PC-9 (cell line): ENCODE measurements at regions of chr11 and their contacts with region 1.

Region 1: GRCh38 chr11:123054301-123055065 is 7.5 kb downstream of the HSPA8 start:
- DNase-seq: peak in 1 of 2 experiments; percentile 74
- H3K4me3 ChIP-seq: no peak overlapping the region
- H3K27ac ChIP-seq: peak overlapping the region; percentile 36
- H3K4me1 ChIP-seq: peaks cover 21% of the 10 kb centered on the region
- H3K27me3 ChIP-seq: no peaks in the 10 kb centered on the region
- CTCF ChIP-seq: peak; percentile 87

Region 2: GRCh38 chr11:122578168-122578825 is 476.2 kb before region 1 on chr11:
- CTCF ChIA-PET with region 1: no interaction called
- POLR2A ChIA-PET with region 1: interaction called, 11 read pairs
- intact Hi-C with region 1: no loop called
- DNase-seq: no peak
- H3K4me3 ChIP-seq: no peak overlapping the region
- H3K27ac ChIP-seq: no peak overlapping the region
- H3K4me1 ChIP-seq: peaks cover 11% of the 10 kb centered on the region
- H3K27me3 ChIP-seq: no peaks in the 10 kb centered on the region
- CTCF ChIP-seq: no peak

Region 3: GRCh38 chr11:122721964-122722266 is 332.6 kb before region 1 on chr11:
- CTCF ChIA-PET with region 1: no interaction called
- POLR2A ChIA-PET with region 1: interaction called, 12 read pairs
- intact Hi-C with region 1: no loop called
- DNase-seq: peak; percentile 52 to 82
- H3K4me3 ChIP-seq: no peak overlapping the region
- H3K27ac ChIP-seq: peak overlapping the region; percentile 41; the same call in 1 of the 2 replicates
- H3K4me1 ChIP-seq: peaks cover 49% of the 10 kb centered on the region
- H3K27me3 ChIP-seq: no peaks in the 10 kb centered on the region
- CTCF ChIP-seq: no peak

Region 4: GRCh38 chr11:122863704-122864326 is 190.7 kb before region 1 on chr11:
- CTCF ChIA-PET with region 1: no interaction called
- POLR2A ChIA-PET with region 1: interaction called, 4 read pairs
- intact Hi-C with region 1: loop called (anchors 1 kb)
- DNase-seq: peak in 1 of 2 experiments; percentile 37
- H3K4me3 ChIP-seq: no peak overlapping the region
- H3K27ac ChIP-seq: 0 out of 2 replicates have a peak overlapping the region, but pooled peaks have one; percentile 5
- H3K4me1 ChIP-seq: peaks cover 35% of the 10 kb centered on the region
- H3K27me3 ChIP-seq: no peaks in the 10 kb centered on the region
- CTCF ChIP-seq: peak; percentile 93

Region 5: GRCh38 chr11:123174196-123175183 is 120.0 kb after region 1 on chr11:
- CTCF ChIA-PET with region 1: interaction called, 14 read pairs
- POLR2A ChIA-PET with region 1: no interaction called
- intact Hi-C with region 1: no loop called
- DNase-seq: peak in 1 of 2 experiments; percentile 84
- H3K4me3 ChIP-seq: no peak overlapping the region
- H3K27ac ChIP-seq: peak overlapping the region; percentile 75
- H3K4me1 ChIP-seq: peaks cover 41% of the 10 kb centered on the region
- H3K27me3 ChIP-seq: no peaks in the 10 kb centered on the region
- CTCF ChIP-seq: no peak

Region 6: DNA sequence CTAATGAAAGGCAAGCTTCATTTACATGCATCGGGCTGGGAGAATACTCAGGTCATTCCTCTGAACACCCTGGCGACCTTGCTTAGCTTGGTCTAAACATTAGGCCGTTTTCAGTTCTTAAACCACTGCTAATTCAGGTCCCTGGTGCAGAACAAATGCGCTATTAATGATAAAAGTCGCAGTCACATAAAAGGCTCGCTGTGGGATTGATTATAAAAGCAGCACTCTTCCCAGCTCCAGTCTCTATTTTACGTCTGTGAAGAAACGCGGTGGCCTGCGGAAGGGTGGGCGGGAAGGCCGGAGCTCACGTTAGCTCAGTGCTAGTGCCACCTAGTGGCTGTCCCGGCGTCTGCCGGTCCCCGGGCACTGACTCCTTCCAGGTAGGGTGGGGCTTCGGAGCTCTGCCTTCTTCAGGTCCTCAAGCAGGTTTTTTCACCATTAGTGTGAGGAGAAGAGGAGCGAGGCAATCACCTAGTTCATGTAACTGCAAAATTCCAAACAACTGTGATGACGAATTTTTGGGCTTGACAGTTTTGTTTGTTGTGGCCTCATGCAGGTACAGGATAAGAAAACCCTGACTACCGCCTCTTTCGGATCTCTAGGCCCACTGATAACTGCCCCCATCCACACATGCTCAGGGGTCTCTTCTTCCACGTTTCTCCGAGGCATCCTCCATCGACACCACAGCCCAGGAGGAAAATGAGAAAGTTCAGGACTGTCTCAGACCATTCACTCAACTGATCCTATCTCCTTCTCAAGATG is 207.0 kb after region 1 on chr11:
- CTCF ChIA-PET with region 1: interaction called, 3 read pairs
- POLR2A ChIA-PET with region 1: interaction called, 13 read pairs
- intact Hi-C with region 1: no loop called
- DNase-seq: peak; percentile 78 to 86
- H3K4me3 ChIP-seq: peak overlapping the region; percentile 32; the same call in 1 of the 2 replicates
- H3K27ac ChIP-seq: no peak overlapping the region
- H3K4me1 ChIP-seq: peaks cover 15% of the 10 kb centered on the region
- H3K27me3 ChIP-seq: no peaks in the 10 kb centered on the region
- CTCF ChIP-seq: peak; percentile 90

Region 7: GRCh38 chr11:123628936-123629683 is 574.6 kb after region 1 on chr11:
- CTCF ChIA-PET with region 1: no interaction called
- POLR2A ChIA-PET with region 1: no interaction called
- intact Hi-C with region 1: no loop called
- DNase-seq: no peak
- H3K4me3 ChIP-seq: no peak overlapping the region
- H3K27ac ChIP-seq: no peak overlapping the region
- H3K4me1 ChIP-seq: no peaks in the 10 kb centered on the region
- H3K27me3 ChIP-seq: peaks cover 29% of the 10 kb centered on the region
- CTCF ChIP-seq: no peak